CD4-positive, alpha-beta T cell (primary cell): ENCODE measurements at regions of chr19 and their contacts with region 1.

Region 1: DNA sequence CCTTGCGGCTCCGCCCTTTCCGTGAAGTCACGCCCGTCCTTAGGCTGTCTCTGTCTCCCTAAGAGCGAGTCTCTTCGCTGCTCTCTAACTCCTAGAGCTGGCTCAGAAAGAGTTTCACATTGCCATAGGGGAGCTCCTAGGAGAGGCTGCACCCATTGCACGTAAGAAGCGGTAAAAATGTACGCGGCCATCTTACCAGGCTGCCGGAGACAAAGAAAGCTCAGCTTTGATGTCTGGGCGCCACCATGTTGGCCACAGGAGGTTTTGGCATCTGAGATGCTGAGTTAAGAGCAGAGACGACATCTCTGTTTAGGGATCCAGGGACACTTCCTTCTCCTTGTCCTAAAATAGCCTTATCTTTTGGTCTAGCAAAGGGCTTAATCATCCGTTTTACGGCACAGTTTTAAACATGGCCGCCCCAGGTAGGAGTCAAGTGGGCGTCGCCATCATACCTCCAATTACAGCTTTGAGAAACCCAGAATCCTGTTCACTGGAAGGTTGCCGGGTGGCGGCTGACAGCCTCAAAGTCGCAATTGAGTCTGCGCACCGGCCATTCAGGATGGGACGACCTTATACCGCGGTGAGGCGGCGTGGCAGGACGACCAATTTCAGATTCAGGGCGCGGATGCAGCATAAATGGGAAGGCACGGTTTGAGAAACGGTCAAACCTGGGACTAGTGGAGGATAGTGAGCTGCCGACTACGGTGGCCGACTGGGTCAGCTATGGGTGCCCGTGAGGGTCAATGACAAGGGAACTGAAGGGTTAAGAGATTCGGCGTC is at the start of gene ZNF793:
- DNase-seq: peak; percentile 68 to 92 (median 78)
- ATAC-seq: peak; percentile 85
- H3K4me3 ChIP-seq: peak within 1 kb of the TSS; percentile 68
- H3K4me3 Mint-ChIP-seq: no peak within 1 kb of the TSS
- H3K27ac ChIP-seq: peak within 1 kb of the TSS; percentile 88 to 92
- H3K27ac Mint-ChIP-seq: no peak within 1 kb of the TSS
- H3K4me1 ChIP-seq: peaks cover 20% of the 10 kb centered on the region
- H3K4me1 Mint-ChIP-seq: no peaks in the 10 kb centered on the region
- H3K27me3 ChIP-seq: no peaks in the 10 kb centered on the region
- H3K27me3 Mint-ChIP-seq: no peaks in the 10 kb centered on the region
- CTCF ChIP-seq: no peak
- total RNA-seq, gene ZNF793: 2.3 TPM

Region 2: DNA sequence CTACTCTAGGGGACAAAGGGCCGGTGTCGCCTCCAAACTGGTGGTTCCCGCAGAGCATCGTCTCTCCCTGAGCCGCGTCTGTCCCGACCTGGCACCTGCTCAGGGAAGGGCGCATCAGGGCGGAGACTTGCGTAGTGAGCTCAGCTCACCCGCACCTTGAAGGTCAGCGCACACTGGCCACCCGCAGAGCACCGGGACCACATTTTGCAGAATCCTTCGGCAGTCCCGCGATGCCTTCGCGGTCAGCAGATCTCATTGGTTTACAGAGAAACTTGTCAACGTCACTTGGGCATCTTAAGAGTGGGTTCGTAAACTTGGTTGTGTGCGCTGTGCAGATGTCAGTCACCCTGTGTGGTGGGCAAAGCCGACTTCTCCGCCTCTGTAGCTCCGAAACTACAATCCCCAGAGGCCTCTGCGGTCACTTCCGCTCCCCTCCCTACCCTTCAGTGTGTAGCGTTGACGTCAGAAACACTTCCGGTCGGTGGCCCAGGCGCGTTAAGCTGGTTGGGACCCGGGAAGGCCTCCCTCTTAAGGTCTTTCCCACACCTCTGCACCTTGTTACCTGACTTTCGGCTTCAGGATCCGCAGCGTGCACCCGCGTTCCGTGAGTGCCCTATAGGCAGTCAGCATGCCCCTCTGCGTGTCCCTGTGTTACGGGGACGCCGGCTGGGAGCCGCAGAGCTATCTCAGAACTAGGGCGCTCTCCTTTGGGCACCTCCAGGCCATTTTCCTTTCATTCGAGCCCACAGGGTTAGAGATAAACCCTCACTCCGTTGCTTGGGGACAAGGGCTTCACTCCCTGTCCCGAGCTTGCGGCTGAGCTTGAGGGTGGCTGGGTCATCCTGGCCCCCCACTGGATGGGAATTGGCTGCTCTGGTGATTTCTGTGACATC is 172.2 kb before region 1 on chr19:
- CTCF ChIA-PET with region 1: no interaction called
- POLR2A ChIA-PET with region 1: interaction called, 15 read pairs
- intact Hi-C with region 1: no loop called
- DNase-seq: peak; percentile 76 to 96 (median 85)
- ATAC-seq: peak; percentile 99
- H3K4me3 ChIP-seq: peak overlapping the region; percentile 66
- H3K4me3 Mint-ChIP-seq: peak overlapping the region; percentile 92
- H3K27ac ChIP-seq: peak overlapping the region; percentile 54 to 69
- H3K27ac Mint-ChIP-seq: peak overlapping the region; percentile 95
- H3K4me1 ChIP-seq: peaks cover 20% of the 10 kb centered on the region
- H3K4me1 Mint-ChIP-seq: peaks cover 40% of the 10 kb centered on the region
- H3K27me3 ChIP-seq: no peaks in the 10 kb centered on the region
- H3K27me3 Mint-ChIP-seq: no peaks in the 10 kb centered on the region
- CTCF ChIP-seq: no peak